Activated CD4-positive, alpha-beta T cell treated with anti-CD3 and anti-CD28 coated beads for 36 hours (primary cell): ENCODE measurements at regions of chr1 and their contacts with region 1.

Region 1: GRCh38 chr1:235878082-235878811 is 11.5 kb upstream of the LYST start:
- DNase-seq: no peak
- ATAC-seq: no peak
- H3K4me3 Mint-ChIP-seq: no peak overlapping the region
- H3K27ac Mint-ChIP-seq: no peak overlapping the region
- H3K4me1 Mint-ChIP-seq: peaks cover 68% of the 10 kb centered on the region
- H3K27me3 Mint-ChIP-seq: no peaks in the 10 kb centered on the region

Region 2: GRCh38 chr1:235917267-235917811 is 39.1 kb after region 1 on chr1:
- CTCF ChIA-PET with region 1: no interaction called
- POLR2A ChIA-PET with region 1: no interaction called
- intact Hi-C with region 1: loop called in 1 of 2 experiments (anchors 2 kb)
- DNase-seq: peak; percentile 84
- ATAC-seq: peak; percentile 97
- H3K4me3 Mint-ChIP-seq: peak overlapping the region; percentile 2
- H3K27ac Mint-ChIP-seq: peak overlapping the region; percentile 75
- H3K4me1 Mint-ChIP-seq: peaks cover 34% of the 10 kb centered on the region
- H3K27me3 Mint-ChIP-seq: no peaks in the 10 kb centered on the region